ENCODE measurements at regions of chr6 and their contacts with region 1.

Region 1: DNA sequence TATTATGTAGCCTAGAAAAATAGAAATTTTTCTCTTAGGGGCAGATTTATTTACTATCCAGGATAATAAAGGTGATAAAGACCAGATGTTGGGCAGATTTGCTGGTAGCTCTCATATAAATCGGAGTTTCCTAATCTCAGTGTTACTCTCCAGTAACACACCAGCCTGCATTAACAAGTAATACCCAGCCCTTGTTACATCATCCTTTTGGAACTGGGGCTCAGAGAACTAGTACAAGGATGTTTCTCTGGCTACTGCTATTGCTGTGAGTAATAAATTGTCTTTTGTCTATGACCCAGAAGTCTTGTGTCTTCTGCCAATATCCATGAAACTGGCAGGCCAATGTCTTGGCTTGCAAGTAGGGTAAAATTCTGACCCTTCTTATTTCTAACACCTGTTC is 16.8 kb downstream of the TPD52L1 start:
- DNase-seq: no peak
- H3K4me3 ChIP-seq: no peak overlapping the region
- H3K27ac ChIP-seq: peak overlapping the region in 1 of 2 donors; percentile 72
- H3K4me1 ChIP-seq: no peaks in the 10 kb centered on the region
- H3K27me3 ChIP-seq: no peaks in the 10 kb centered on the region
- CTCF ChIP-seq: no peak
- POLR2A ChIP-seq: no peak

Region 2: GRCh38 chr6:126312013-126312663 is 1141.8 kb after region 1 on chr6:
- intact Hi-C with region 1: loop called (anchors 10 kb)
- DNase-seq: no peak
- H3K4me3 ChIP-seq: no peak overlapping the region
- H3K27ac ChIP-seq: no peak overlapping the region
- H3K4me1 ChIP-seq: no peaks in the 10 kb centered on the region
- H3K27me3 ChIP-seq: no peaks in the 10 kb centered on the region
- CTCF ChIP-seq: no peak
- POLR2A ChIP-seq: no peak